ENCODE measurements at regions of chr2 and their contacts with region 1.

Region 1: GRCh38 chr2:161063157-161063954 is 96.9 kb upstream of the TANK start:
- DNase-seq: peak; percentile 41 to 85
- H3K4me3 ChIP-seq: no peak overlapping the region
- H3K27ac ChIP-seq: no peak overlapping the region
- H3K4me1 ChIP-seq: peaks cover 0 to 5% (median 0%) of the 10 kb centered on the region in 4 experiments; a peak in 2 of 7 replicates
- H3K27me3 ChIP-seq: no peaks in the 10 kb centered on the region
- CTCF ChIP-seq: peak; percentile 50 to 90 (median 79)
- EP300 ChIP-seq: no peak
- POLR2A ChIP-seq: no peak
- RAD21 ChIP-seq: peak; percentile 90 to 94

Region 2: DNA sequence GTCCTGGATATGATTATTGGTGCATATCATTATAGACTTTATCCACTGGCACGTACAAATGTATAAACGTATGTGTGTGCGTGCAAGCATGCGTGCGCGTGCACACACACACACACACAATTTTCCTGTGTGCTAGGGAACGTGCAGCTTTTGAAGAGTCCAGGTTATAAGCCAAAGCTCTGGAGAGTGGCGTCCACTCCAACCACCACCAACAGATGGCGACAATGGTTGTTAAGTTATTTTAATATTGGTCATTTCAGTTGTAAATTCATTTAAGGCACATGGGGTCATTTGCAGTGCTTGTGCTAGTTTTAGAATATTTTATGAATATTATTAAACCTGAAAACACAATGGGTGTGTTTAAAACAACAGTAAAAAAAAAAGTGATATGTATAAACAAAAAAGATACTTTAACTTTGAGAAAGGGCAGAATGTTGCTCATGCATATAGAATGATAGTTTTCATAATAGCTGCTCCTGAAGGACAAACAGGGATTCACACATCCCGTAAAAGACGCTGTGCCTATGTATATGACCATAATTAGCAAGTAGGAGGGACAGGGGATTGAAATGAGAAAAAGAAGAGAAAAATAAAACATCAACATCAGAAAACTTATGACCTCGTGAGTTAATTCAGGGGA is 739.1 kb before region 1 on chr2:
- CTCF ChIA-PET with region 1: interaction called, 10 read pairs
- POLR2A ChIA-PET with region 1: no interaction called
- DNase-seq: no peak
- H3K4me3 ChIP-seq: no peak overlapping the region
- H3K27ac ChIP-seq: no peak overlapping the region
- H3K4me1 ChIP-seq: peaks cover 2 to 5% (median 4%) of the 10 kb centered on the region in 4 experiments; a peak in 4 of 7 replicates
- H3K27me3 ChIP-seq: no peaks in the 10 kb centered on the region
- CTCF ChIP-seq: peak; percentile 14 to 61 (median 49); a peak in 3 of 4 replicates
- EP300 ChIP-seq: no peak
- POLR2A ChIP-seq: no peak
- RAD21 ChIP-seq: peak; percentile 55 to 67

Region 3: DNA sequence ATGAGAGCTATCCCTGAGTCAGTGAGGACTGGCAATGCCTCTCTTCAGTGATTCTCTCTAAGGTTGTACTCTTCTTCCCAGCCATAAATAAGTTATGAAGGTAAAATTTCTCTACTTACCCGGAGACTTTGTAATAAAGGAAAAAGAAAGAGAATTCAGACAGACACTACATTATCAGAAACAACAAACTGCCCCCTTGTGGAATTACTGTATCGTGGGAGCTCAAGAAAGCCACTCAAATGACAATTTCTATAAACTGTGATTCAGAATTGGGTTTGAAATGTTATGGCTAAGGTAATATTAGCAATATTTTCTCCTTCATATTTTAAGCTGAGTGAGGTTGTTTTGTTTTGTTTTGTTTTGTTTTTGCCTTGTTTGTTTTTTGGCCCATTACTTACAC is 59.0 kb before region 1 on chr2:
- CTCF ChIA-PET with region 1: interaction called, 16 read pairs
- POLR2A ChIA-PET with region 1: no interaction called
- DNase-seq: no peak
- H3K4me3 ChIP-seq: no peak overlapping the region
- H3K27ac ChIP-seq: no peak overlapping the region
- H3K4me1 ChIP-seq: no peaks in the 10 kb centered on the region
- H3K27me3 ChIP-seq: no peaks in the 10 kb centered on the region
- CTCF ChIP-seq: peak in 2 of 3 experiments; percentile 13 to 38; a peak in 2 of 4 replicates
- EP300 ChIP-seq: no peak
- POLR2A ChIP-seq: no peak
- RAD21 ChIP-seq: peak; percentile 44 to 49; a peak in 3 of 4 replicates

Region 4: DNA sequence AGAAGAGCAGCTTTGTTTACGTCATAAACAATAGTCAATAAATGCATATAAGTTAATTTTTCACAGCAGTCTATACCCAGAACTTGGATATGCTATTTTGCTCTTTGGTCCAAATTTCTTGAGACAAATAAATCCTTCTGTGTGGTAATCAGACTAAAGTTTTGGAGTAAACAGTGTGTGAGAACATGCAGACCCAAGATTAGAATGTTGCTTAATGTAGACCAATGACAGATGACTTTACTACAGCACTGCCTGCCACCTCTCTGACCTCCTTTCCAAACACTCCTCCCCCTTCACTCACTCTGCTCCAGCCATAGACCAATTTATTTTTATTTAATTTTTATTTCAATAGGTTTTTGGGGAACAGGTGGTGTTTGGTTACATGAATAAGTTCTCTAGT is 18.4 kb before region 1 on chr2:
- CTCF ChIA-PET with region 1: interaction called, 19 read pairs
- POLR2A ChIA-PET with region 1: no interaction called
- DNase-seq: no peak
- H3K4me3 ChIP-seq: no peak overlapping the region
- H3K27ac ChIP-seq: no peak overlapping the region
- H3K4me1 ChIP-seq: peaks cover 0 to 9% (median 5%) of the 10 kb centered on the region in 4 experiments; a peak in 3 of 7 replicates
- H3K27me3 ChIP-seq: no peaks in the 10 kb centered on the region
- CTCF ChIP-seq: no peak
- EP300 ChIP-seq: no peak
- POLR2A ChIP-seq: no peak
- RAD21 ChIP-seq: no peak

Region 5: GRCh38 chr2:161052214-161052613 is 11.1 kb before region 1 on chr2:
- CTCF ChIA-PET with region 1: interaction called, 56 read pairs
- POLR2A ChIA-PET with region 1: no interaction called
- DNase-seq: no peak
- H3K4me3 ChIP-seq: no peak overlapping the region
- H3K27ac ChIP-seq: no peak overlapping the region
- H3K4me1 ChIP-seq: peaks cover 0 to 9% (median 5%) of the 10 kb centered on the region in 4 experiments; a peak in 3 of 7 replicates
- H3K27me3 ChIP-seq: no peaks in the 10 kb centered on the region
- CTCF ChIP-seq: no peak
- EP300 ChIP-seq: no peak
- POLR2A ChIP-seq: no peak
- RAD21 ChIP-seq: no peak

Region 6: DNA sequence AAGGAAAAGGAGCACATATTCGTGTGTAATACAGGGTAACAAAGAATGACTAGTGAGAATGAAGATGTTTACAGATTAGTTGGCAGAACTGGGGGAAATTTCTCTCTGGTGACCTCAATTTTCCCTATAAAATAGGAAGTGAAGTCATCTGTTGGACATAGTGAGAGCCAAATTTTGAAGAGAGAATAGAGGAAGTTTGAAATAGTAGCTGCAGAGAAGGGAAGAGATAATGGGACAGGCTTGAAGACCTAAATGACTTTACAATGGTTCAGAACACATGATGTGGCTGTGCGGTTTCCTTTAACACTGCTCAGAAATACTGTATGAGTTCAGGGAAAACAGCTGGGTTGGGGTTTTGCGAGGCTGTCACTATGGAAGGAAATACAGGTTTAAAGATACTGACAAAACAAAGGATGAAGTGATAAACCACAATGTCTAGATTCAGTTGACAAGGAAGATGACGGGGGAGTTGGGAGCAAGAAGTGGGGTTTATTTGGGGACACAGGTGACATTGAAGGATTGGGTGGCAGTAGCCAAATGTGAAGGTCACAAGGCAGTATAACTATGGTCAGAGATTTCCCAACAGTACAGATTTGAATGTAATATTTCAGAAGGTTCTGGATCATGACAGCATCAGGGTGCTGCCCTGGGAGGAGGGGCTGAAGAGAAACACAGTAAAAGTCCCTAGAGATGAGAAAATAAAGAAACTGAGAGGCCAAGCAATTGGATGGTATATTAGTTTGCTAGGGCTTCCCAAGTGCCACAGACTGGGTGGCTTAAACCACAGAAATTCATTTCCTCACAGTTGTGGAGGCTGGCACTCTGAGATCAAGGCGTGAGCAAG is 14.2 kb after region 1 on chr2:
- CTCF ChIA-PET with region 1: interaction called, 20 read pairs
- POLR2A ChIA-PET with region 1: no interaction called
- DNase-seq: no peak
- H3K4me3 ChIP-seq: no peak overlapping the region
- H3K27ac ChIP-seq: no peak overlapping the region
- H3K4me1 ChIP-seq: no peaks in the 10 kb centered on the region; a peak in 2 of 7 replicates
- H3K27me3 ChIP-seq: no peaks in the 10 kb centered on the region
- CTCF ChIP-seq: no peak
- EP300 ChIP-seq: no peak
- POLR2A ChIP-seq: no peak
- RAD21 ChIP-seq: no peak

Measured in H1 (cell line).